AG04449 (cell line): ENCODE measurements at regions of chr6 and their contacts with region 1.

Region 1: DNA sequence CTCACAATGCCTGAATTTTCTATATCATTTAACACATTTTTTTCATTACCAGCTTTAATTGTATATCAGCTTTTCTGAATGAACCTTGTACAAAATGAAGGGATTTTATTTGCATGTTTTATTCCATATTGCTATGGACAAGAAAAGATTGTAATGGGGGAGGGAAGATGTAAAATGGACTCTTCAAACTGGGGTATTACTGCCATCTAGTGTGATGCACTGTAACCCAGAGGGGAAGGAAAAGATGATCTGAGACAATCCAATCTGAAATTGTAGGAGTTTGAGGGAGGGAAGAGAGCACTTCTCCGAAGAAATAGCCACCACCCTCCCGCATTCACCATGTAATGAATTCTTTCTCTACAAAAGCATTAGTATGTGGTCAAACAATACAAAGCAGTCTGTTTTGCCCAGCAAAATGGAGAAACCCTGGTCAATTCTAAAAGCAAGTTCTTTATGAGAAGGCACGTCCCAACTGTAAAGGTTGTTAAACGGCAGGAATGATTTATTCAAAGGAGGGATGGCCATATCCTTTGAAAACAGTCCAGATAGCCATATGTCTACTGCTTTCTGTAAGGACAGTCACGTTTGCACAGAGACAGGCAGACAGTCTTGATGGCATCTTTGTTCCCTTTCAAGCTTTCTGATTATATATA is 679.5 kb upstream of the NRSN1 start:
- DNase-seq: peak; percentile 23
- H3K4me3 ChIP-seq: no peak overlapping the region
- CTCF ChIP-seq: peak; percentile 52

Region 2: DNA sequence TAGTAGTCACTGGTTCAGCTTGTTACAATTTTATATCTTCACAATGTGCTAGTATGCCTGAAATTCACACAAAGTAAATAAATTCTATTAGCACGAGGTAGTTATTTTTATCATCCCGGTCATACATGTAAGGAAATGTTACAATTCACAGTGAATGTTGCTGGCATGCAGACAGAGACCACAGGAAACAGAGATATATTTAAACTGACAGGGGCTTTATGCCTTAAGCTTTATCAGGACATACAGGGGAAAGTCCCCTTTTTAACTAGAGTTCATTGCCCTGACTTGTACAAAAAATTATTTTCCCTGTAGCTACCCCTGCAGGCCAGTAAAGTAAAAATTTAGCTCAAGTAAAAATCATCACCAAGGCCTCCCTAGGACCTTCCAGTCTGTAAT is 32.5 kb before region 1 on chr6:
- CTCF ChIA-PET with region 1: interaction called, 14 read pairs
- POLR2A ChIA-PET with region 1: no interaction called
- DNase-seq: peak; percentile 59
- H3K4me3 ChIP-seq: no peak overlapping the region
- CTCF ChIP-seq: peak; percentile 40

Region 3: GRCh38 chr6:23435126-23435525 is 11.4 kb before region 1 on chr6:
- CTCF ChIA-PET with region 1: interaction called, 11 read pairs
- POLR2A ChIA-PET with region 1: no interaction called
- DNase-seq: no peak
- H3K4me3 ChIP-seq: no peak overlapping the region
- CTCF ChIP-seq: no peak